Activated naive CD8-positive, alpha-beta T cell treated with anti-CD3 and anti-CD28 coated beads, Interleukin-2, amount 10 ng/mL, durations not matched to agents 7 days and 5 days (primary cell): ENCODE measurements at regions of chr6 and their contacts with region 1.

Region 1: GRCh38 chr6:26457806-26458688 is at the start of gene BTN2A1:
- DNase-seq: peak; percentile 68
- ATAC-seq: peak; percentile 97
- H3K4me3 Mint-ChIP-seq: peak within 1 kb of the TSS; percentile 96
- H3K27ac Mint-ChIP-seq: peak within 1 kb of the TSS; percentile 93
- H3K4me1 Mint-ChIP-seq: peaks cover 43% of the 10 kb centered on the region
- H3K27me3 Mint-ChIP-seq: no peaks in the 10 kb centered on the region
- total RNA-seq, gene BTN2A1: 45.2 to 46.7 TPM

Region 2: GRCh38 chr6:24876499-24877465 is 1581.3 kb before region 1 on chr6:
- POLR2A ChIA-PET with region 1: no interaction called
- DNase-seq: no peak
- ATAC-seq: no peak
- H3K4me3 Mint-ChIP-seq: no peak overlapping the region
- H3K27ac Mint-ChIP-seq: peak overlapping the region; percentile 4
- H3K4me1 Mint-ChIP-seq: peaks cover 20% of the 10 kb centered on the region
- H3K27me3 Mint-ChIP-seq: no peaks in the 10 kb centered on the region

Region 3: DNA sequence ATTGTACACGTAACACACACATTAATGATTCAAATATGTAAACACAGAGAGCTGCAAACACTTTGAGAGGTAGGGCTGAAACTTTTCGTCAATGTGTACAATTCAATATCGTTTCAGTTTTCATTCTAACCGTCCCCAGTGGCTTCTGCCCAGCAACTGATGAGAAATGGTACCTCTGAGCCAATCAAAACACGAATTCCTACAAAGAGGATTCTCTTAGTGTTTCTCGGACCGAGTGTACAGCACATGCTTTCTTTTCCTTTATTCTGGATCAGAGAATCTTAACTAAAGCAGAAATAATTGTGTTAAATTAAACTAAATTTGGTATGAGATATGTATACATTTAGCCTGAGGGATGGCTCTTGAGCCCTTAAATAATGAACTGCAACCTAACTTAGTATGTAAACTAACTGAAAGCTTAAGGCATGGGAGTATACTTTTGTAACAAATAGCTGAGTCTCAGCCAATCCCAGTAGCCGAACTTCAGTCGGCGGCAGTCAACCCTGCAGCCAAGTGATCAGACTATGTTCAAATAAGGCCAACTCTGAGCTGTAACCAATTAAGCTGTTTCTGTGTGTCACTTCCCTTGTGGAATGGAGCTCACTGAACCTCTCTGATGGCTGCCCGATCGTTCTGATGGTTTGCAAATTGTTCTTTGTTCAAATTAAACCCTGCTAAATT is 15.9 kb after region 1 on chr6:
- POLR2A ChIA-PET with region 1: interaction called, 10 read pairs
- DNase-seq: peak; percentile 59
- ATAC-seq: peak; percentile 94
- H3K4me3 Mint-ChIP-seq: peak overlapping the region; percentile 96
- H3K27ac Mint-ChIP-seq: peak overlapping the region; percentile 99
- H3K4me1 Mint-ChIP-seq: peaks cover 22% of the 10 kb centered on the region
- H3K27me3 Mint-ChIP-seq: no peaks in the 10 kb centered on the region